H1 (cell line): ENCODE measurements at regions of chr6 and their contacts with region 1.

Region 1: GRCh38 chr6:111041917-111042316 is 45.4 kb upstream of the SLC16A10 start:
- DNase-seq: no peak
- H3K4me3 ChIP-seq: no peak overlapping the region
- H3K27ac ChIP-seq: no peak overlapping the region
- H3K4me1 ChIP-seq: no peaks in the 10 kb centered on the region
- H3K27me3 ChIP-seq: no peaks in the 10 kb centered on the region; a peak in 2 of 7 replicates
- CTCF ChIP-seq: no peak
- EP300 ChIP-seq: no peak
- POLR2A ChIP-seq: no peak
- RAD21 ChIP-seq: no peak

Region 2: GRCh38 chr6:111030008-111031007 is 11.6 kb before region 1 on chr6:
- CTCF ChIA-PET with region 1: interaction called, 3 read pairs
- POLR2A ChIA-PET with region 1: interaction called, 12 read pairs
- DNase-seq: no peak
- H3K4me3 ChIP-seq: no peak overlapping the region
- H3K27ac ChIP-seq: no peak overlapping the region
- H3K4me1 ChIP-seq: peaks cover 3 to 15% (median 8%) of the 10 kb centered on the region in 4 experiments; a peak in 6 of 7 replicates
- H3K27me3 ChIP-seq: no peaks in the 10 kb centered on the region
- CTCF ChIP-seq: no peak
- EP300 ChIP-seq: no peak
- POLR2A ChIP-seq: no peak
- RAD21 ChIP-seq: no peak

Region 3: DNA sequence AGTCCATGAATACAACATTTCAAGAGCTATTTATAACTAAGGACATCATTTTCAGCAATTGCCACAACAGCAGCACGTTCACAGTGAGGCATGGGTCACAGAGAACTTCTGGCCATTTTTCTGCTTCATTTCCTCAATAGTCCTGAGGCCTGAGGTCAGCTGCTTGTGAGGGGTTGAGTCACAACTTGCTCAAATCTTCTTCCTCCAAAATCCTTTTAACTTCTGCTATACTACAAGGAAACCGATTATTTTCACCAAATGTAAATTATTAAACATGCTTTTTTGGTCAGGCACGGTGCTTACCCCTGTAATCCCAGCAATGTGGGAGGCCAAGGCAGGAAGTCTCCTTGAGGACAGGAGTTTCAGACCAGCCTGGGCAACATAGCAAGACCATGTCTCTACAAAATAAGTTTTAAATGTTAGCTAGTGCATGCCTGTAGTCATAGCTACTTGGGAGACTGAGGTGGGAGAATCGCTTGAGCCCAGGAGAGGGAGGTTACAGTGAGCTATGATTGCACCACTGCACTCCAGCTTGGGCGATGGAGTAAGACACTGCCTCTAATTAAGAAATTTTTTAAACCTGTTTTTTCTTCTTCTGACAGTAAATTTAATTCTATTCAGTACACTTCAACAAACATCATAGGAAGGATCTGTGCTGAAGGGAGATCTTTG is 34.2 kb after region 1 on chr6:
- CTCF ChIA-PET with region 1: no interaction called
- POLR2A ChIA-PET with region 1: no interaction called
- DNase-seq: no peak
- H3K4me3 ChIP-seq: no peak overlapping the region
- H3K27ac ChIP-seq: no peak overlapping the region
- H3K4me1 ChIP-seq: no peaks in the 10 kb centered on the region
- H3K27me3 ChIP-seq: no peaks in the 10 kb centered on the region
- CTCF ChIP-seq: no peak
- EP300 ChIP-seq: no peak
- POLR2A ChIP-seq: no peak
- RAD21 ChIP-seq: no peak